Naive thymus-derived CD4-positive, alpha-beta T cell (primary cell): ENCODE measurements at regions of chr19 and their contacts with region 1.

Region 1: GRCh38 chr19:35213663-35214632 is 14.6 kb downstream of the FAM187B start:
- DNase-seq: peak; percentile 35 to 97 (median 90)
- ATAC-seq: peak; percentile 49
- H3K4me3 ChIP-seq: peak overlapping the region; percentile 24
- H3K4me3 Mint-ChIP-seq: peak overlapping the region; percentile 31 to 91 (median 71)
- H3K27ac ChIP-seq: peak overlapping the region; percentile 91
- H3K27ac Mint-ChIP-seq: peak overlapping the region; percentile 98 to 100 (median 100)
- H3K4me1 ChIP-seq: peaks cover 47 to 52% of the 10 kb centered on the region in 2 donors
- H3K4me1 Mint-ChIP-seq: peaks cover 41 to 81% (median 70%) of the 10 kb centered on the region in 7 donors
- H3K27me3 ChIP-seq: no peaks in the 10 kb centered on the region
- H3K27me3 Mint-ChIP-seq: no peaks in the 10 kb centered on the region

Region 2: GRCh38 chr19:35114353-35115176 is 99.4 kb before region 1 on chr19:
- CTCF ChIA-PET with region 1: no interaction called
- POLR2A ChIA-PET with region 1: no interaction called
- intact Hi-C with region 1: loop called in 1 of 2 experiments (anchors 1 kb)
- DNase-seq: peak; percentile 46 to 77 (median 59)
- ATAC-seq: peak; percentile 92
- H3K4me3 ChIP-seq: no peak overlapping the region
- H3K4me3 Mint-ChIP-seq: peak overlapping the region in 7 of 10 donors; percentile 2 to 49 (median 25)
- H3K27ac ChIP-seq: no peak overlapping the region
- H3K27ac Mint-ChIP-seq: peak overlapping the region in 1 of 9 donors; percentile 50
- H3K4me1 ChIP-seq: peaks cover 0 to 7% of the 10 kb centered on the region in 2 donors
- H3K4me1 Mint-ChIP-seq: peaks cover 5 to 8% (median 6%) of the 10 kb centered on the region in 7 donors
- H3K27me3 ChIP-seq: no peaks in the 10 kb centered on the region
- H3K27me3 Mint-ChIP-seq: peaks cover 0 to 20% (median 0%) of the 10 kb centered on the region in 5 donors

Region 3: GRCh38 chr19:35134601-35135242 is 79.2 kb before region 1 on chr19 and contains the start of gene LGI4:
- CTCF ChIA-PET with region 1: no interaction called
- POLR2A ChIA-PET with region 1: no interaction called
- intact Hi-C with region 1: no loop called
- DNase-seq: no peak
- ATAC-seq: no peak
- H3K4me3 ChIP-seq: no peak within 1 kb of the TSS
- H3K4me3 Mint-ChIP-seq: peak within 1 kb of the TSS in 1 of 10 donors; percentile 4
- H3K27ac ChIP-seq: no peak within 1 kb of the TSS
- H3K27ac Mint-ChIP-seq: no peak within 1 kb of the TSS
- H3K4me1 ChIP-seq: no peaks in the 10 kb centered on the region
- H3K4me1 Mint-ChIP-seq: peaks cover 4 to 11% (median 5%) of the 10 kb centered on the region in 7 donors
- H3K27me3 ChIP-seq: no peaks in the 10 kb centered on the region
- H3K27me3 Mint-ChIP-seq: peaks cover 0 to 11% (median 0%) of the 10 kb centered on the region in 5 donors
- total RNA-seq, gene LGI4: 0.19 to 1.6 (median 0.51) TPM

Region 4: GRCh38 chr19:35161434-35161743 is 52.6 kb before region 1 on chr19:
- CTCF ChIA-PET with region 1: interaction called, 3 read pairs
- POLR2A ChIA-PET with region 1: interaction called, 74 read pairs
- intact Hi-C with region 1: no loop called
- DNase-seq: no peak
- ATAC-seq: no peak
- H3K4me3 ChIP-seq: no peak overlapping the region
- H3K4me3 Mint-ChIP-seq: no peak overlapping the region
- H3K27ac ChIP-seq: no peak overlapping the region
- H3K27ac Mint-ChIP-seq: peak overlapping the region in 7 of 9 donors; percentile 71 to 93 (median 80)
- H3K4me1 ChIP-seq: peaks cover 11 to 19% of the 10 kb centered on the region in 2 donors
- H3K4me1 Mint-ChIP-seq: peaks cover 25 to 60% (median 49%) of the 10 kb centered on the region in 7 donors
- H3K27me3 ChIP-seq: no peaks in the 10 kb centered on the region
- H3K27me3 Mint-ChIP-seq: no peaks in the 10 kb centered on the region

Region 5: GRCh38 chr19:35184884-35185283 is 29.1 kb before region 1 on chr19:
- CTCF ChIA-PET with region 1: interaction called, 4 read pairs
- POLR2A ChIA-PET with region 1: interaction called, 13 read pairs
- intact Hi-C with region 1: loop called in 1 of 2 experiments (anchors 1 kb)
- DNase-seq: no peak
- ATAC-seq: no peak
- H3K4me3 ChIP-seq: no peak overlapping the region
- H3K4me3 Mint-ChIP-seq: no peak overlapping the region
- H3K27ac ChIP-seq: no peak overlapping the region
- H3K27ac Mint-ChIP-seq: no peak overlapping the region
- H3K4me1 ChIP-seq: peaks cover 0 to 6% of the 10 kb centered on the region in 2 donors
- H3K4me1 Mint-ChIP-seq: peaks cover 3 to 20% (median 14%) of the 10 kb centered on the region in 7 donors
- H3K27me3 ChIP-seq: no peaks in the 10 kb centered on the region
- H3K27me3 Mint-ChIP-seq: peaks cover 0 to 16% (median 0%) of the 10 kb centered on the region in 5 donors

Region 6: GRCh38 chr19:35247526-35248306 is 33.8 kb after region 1 on chr19:
- CTCF ChIA-PET with region 1: no interaction called
- POLR2A ChIA-PET with region 1: interaction called, 10 read pairs
- intact Hi-C with region 1: loop called in 1 of 2 experiments (anchors 1 kb)
- DNase-seq: peak in 4 of 9 donors; percentile 33 to 52 (median 39)
- ATAC-seq: peak; percentile 63
- H3K4me3 ChIP-seq: peak overlapping the region; percentile 81
- H3K4me3 Mint-ChIP-seq: peak overlapping the region; percentile 87 to 92 (median 92)
- H3K27ac ChIP-seq: peak overlapping the region; percentile 63
- H3K27ac Mint-ChIP-seq: peak overlapping the region; percentile 64 to 95 (median 90)
- H3K4me1 ChIP-seq: peaks cover 0 to 4% of the 10 kb centered on the region in 2 donors
- H3K4me1 Mint-ChIP-seq: peaks cover 18 to 41% (median 33%) of the 10 kb centered on the region in 7 donors
- H3K27me3 ChIP-seq: no peaks in the 10 kb centered on the region
- H3K27me3 Mint-ChIP-seq: peaks cover 0 to 66% (median 5%) of the 10 kb centered on the region in 5 donors

Region 7: GRCh38 chr19:35899547-35900214 is 685.7 kb after region 1 on chr19:
- CTCF ChIA-PET with region 1: no interaction called
- POLR2A ChIA-PET with region 1: no interaction called
- intact Hi-C with region 1: loop called in 1 of 2 experiments (anchors 5 kb)
- DNase-seq: peak; percentile 74 to 94 (median 87)
- ATAC-seq: peak; percentile 74
- H3K4me3 ChIP-seq: peak overlapping the region; percentile 94
- H3K4me3 Mint-ChIP-seq: peak overlapping the region; percentile 83 to 100 (median 95)
- H3K27ac ChIP-seq: peak overlapping the region; percentile 100
- H3K27ac Mint-ChIP-seq: peak overlapping the region; percentile 92 to 97 (median 96)
- H3K4me1 ChIP-seq: peaks cover 35 to 43% of the 10 kb centered on the region in 2 donors
- H3K4me1 Mint-ChIP-seq: peaks cover 34 to 65% (median 46%) of the 10 kb centered on the region in 7 donors
- H3K27me3 ChIP-seq: no peaks in the 10 kb centered on the region
- H3K27me3 Mint-ChIP-seq: no peaks in the 10 kb centered on the region